ENCODE measurements at regions of chr17 and their contacts with region 1.

Region 1: DNA sequence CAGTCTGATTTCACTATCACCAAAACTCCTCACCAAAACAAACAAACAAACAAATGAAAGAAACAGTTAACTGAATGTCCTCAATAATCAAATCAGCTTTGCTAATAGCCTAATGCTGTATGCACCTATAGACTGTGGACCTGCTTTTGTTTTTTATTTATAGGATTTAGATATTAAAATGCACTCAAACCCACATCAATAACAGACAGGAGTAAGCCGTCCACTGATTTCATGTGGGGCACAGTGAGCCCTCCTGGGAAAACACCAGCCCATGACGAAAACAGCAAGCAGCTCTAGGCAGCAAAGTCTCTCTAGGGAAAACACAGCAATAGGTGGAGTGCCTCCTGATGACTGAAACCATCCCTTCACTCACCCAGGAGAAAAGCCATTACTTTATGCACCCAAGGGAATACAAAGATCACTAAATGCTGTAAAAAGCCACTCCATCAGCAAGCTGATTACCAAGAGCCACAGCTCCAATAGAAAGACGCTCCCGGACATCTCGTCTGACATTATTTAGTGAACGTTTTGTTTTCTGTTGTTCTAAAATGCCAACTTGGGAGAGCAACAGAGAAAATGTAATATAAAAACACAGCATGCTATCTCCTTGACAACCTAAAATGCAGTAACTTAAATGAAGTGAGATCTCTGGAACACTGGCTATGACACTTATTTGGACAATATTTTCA is 47.8 kb downstream of the ANKFY1 start:
- DNase-seq: no peak
- ATAC-seq: no peak
- H3K4me3 ChIP-seq: no peak overlapping the region
- H3K27ac ChIP-seq: peak overlapping the region; percentile 74 to 85 (median 80)
- H3K4me1 ChIP-seq: peaks cover 34 to 45% of the 10 kb centered on the region in 2 donors
- H3K27me3 ChIP-seq: no peaks in the 10 kb centered on the region
- CTCF ChIP-seq: no peak
- POLR2A ChIP-seq: no peak

Region 2: GRCh38 chr17:4143563-4144421 is 72.2 kb before region 1 on chr17:
- in situ Hi-C with region 1: no loop called
- intact Hi-C with region 1: loop called (anchors 5 kb)
- DNase-seq: peak; percentile 76 to 90
- ATAC-seq: peak; percentile 79 to 81
- H3K4me3 ChIP-seq: peak overlapping the region; percentile 69 to 99 (median 95)
- H3K27ac ChIP-seq: peak overlapping the region; percentile 97 to 100 (median 99)
- H3K4me1 ChIP-seq: peaks cover 35 to 39% of the 10 kb centered on the region in 2 donors
- H3K27me3 ChIP-seq: no peaks in the 10 kb centered on the region
- CTCF ChIP-seq: no peak
- POLR2A ChIP-seq: peak; percentile 71 to 75

Region 3: GRCh38 chr17:4263282-4264215 is 47.5 kb after region 1 on chr17 and contains the start of gene ANKFY1:
- in situ Hi-C with region 1: no loop called
- intact Hi-C with region 1: loop called (anchors 1 kb)
- DNase-seq: peak; percentile 90 to 92
- ATAC-seq: peak; percentile 86 to 93
- H3K4me3 ChIP-seq: peak within 1 kb of the TSS; percentile 67 to 99 (median 86)
- H3K27ac ChIP-seq: peak within 1 kb of the TSS; percentile 79 to 93 (median 82)
- H3K4me1 ChIP-seq: peaks cover 19 to 21% of the 10 kb centered on the region in 2 donors
- H3K27me3 ChIP-seq: no peaks in the 10 kb centered on the region
- CTCF ChIP-seq: peak in 2 of 5 experiments; percentile 21 to 35
- POLR2A ChIP-seq: peak; percentile 70 to 75
- total RNA-seq, gene ANKFY1: 12.6 to 26.9 (median 13.5) TPM

Region 4: DNA sequence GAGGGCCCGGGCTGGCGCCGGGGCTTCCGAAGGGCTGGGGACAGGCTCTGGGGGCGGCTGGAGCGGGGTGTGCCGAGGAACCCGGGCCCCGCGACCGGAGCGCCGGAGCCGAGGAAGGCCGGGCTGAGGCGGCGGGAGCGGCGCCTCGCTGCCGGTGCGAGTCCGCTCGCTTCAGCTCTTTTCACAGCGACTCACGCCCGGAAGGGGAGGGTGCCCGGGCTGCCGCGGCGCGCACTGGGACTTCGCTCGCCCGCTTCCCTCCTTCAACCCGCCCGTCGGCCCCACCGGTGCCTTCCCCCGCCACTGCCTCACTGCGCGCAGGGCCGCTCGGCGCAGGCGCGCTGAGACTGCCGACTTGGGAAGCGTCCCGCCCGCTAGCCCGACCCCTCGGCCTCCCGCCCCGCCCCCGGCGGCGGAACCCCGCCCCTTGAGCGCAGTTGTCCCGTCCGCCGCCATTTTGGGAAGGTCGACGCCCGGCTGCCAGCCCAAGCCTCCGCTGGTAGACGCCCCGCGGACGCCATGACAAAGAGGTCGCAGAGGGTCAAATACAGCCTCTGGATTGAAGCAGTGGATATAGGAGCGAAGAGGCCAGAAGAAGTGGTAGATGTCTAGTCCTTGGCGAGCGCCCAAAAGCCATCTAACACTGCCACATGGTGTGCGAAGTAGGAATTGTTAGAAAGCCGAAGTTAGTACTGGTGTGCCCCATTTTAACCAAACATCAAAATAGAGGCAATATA is 150.5 kb after region 1 on chr17 and contains the start of gene UBE2G1:
- in situ Hi-C with region 1: no loop called
- intact Hi-C with region 1: loop called (anchors 1 kb)
- DNase-seq: peak; percentile 95 to 97
- ATAC-seq: peak; percentile 61
- H3K4me3 ChIP-seq: peak within 1 kb of the TSS; percentile 79 to 100 (median 94)
- H3K27ac ChIP-seq: peak within 1 kb of the TSS; percentile 89 to 100 (median 98)
- H3K4me1 ChIP-seq: peaks cover 20 to 31% of the 10 kb centered on the region in 2 donors
- H3K27me3 ChIP-seq: no peaks in the 10 kb centered on the region
- CTCF ChIP-seq: peak in 3 of 5 experiments; percentile 33 to 51 (median 44)
- POLR2A ChIP-seq: peak; percentile 99
- total RNA-seq, gene UBE2G1: 152 to 217 (median 180) TPM

Region 5: DNA sequence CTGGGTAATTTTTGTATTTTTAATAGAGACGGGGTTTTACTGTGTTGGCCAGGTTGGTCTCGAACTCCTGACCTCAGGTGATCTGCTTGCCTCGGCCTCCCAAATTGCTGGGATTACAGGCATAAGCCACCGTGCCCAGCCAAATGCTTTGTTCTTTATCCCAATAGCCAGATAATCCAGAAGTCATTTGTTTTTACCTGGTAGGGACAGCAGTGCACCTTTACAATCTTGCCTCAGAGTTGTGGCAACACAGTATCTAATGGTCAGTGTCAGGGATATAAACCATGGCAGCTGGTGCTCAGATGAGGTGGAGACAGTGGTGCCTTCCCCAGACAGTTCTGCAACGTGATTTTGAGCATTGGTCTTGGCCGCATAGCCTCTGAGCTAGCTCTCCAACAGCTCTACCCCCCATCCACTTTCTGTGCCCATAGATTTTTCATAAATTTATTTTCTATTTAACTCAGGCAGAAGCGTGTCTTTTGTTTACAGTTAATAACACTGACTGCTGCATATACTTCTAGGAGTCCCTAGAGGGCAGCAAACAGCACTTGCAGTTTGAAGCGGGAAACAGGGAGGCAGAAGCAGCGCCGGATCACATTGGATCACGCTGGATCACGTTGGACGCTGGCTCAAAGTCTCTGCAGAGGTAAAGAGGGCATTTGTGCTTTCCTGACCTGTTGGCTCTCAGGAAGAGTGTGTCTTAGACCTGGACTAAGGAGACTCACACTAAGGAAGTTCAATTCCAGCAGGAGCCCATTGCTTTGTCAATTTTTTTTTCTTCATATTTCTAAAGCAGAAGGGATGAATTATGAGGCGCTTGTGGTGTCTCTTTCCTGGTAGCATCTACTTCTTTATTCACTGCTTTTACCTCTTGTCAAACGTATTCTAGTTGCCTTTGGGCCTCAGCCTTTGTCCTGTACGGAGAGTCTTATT is 349.4 kb after region 1 on chr17:
- in situ Hi-C with region 1: no loop called
- intact Hi-C with region 1: loop called (anchors 10 kb)
- DNase-seq: peak; percentile 62 to 75
- ATAC-seq: peak; percentile 78 to 87
- H3K4me3 ChIP-seq: no peak overlapping the region
- H3K27ac ChIP-seq: peak overlapping the region; percentile 9 to 73 (median 22)
- H3K4me1 ChIP-seq: peaks cover 5 to 8% of the 10 kb centered on the region in 2 donors
- H3K27me3 ChIP-seq: no peaks in the 10 kb centered on the region
- CTCF ChIP-seq: peak; percentile 79 to 88 (median 86)
- POLR2A ChIP-seq: no peak

Measured in gastrocnemius medialis (tissue), 4 donors.